GM12878 (cell line): ENCODE measurements at regions of chr5 and their contacts with region 1.

Region 1: DNA sequence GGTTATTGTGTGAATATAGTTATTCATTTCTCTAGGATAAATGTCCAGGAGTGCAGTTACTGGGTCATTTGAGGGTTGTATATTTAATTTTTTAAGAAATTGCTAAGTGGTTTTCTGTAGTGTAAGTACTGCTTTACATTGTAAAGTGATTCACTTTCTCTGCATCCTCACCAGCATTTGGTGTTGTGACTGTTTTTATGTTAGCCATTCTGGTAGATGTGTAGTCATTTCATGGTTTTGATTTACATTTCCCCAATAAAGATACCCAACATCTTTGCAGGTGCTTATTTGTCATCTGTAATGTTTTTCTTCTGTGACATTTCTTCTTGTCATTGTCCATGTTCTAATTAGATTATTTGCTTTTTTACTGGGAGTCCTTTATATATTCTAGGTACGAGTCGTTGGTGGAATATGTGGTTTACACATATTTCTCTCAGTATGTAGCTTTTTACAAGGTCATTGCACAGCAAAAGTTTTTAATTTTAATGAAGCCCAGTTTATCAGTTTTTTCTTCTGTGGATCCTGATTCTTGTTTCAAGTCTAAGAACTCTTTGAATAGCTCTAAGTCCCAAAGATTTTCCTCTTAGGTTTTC is 34.0 kb downstream of the SCGB3A1 start:
- DNase-seq: no peak
- ATAC-seq: no peak
- H3K4me3 ChIP-seq: no peak overlapping the region
- H3K27ac ChIP-seq: no peak overlapping the region
- H3K4me1 ChIP-seq: peaks cover 13% of the 10 kb centered on the region
- H3K27me3 ChIP-seq: no peaks in the 10 kb centered on the region
- CTCF ChIP-seq: no peak
- EP300 ChIP-seq: no peak
- POLR2A ChIP-seq: no peak
- RAD21 ChIP-seq: no peak

Region 2: GRCh38 chr5:180390441-180391190 is 166.7 kb before region 1 on chr5:
- CTCF ChIA-PET with region 1: no interaction called
- POLR2A ChIA-PET with region 1: no interaction called
- RAD21 ChIA-PET with region 1: no interaction called
- SMC1A ChIA-PET with region 1: no interaction called
- in situ Hi-C with region 1: no loop called
- intact Hi-C with region 1: no loop called
- DNase-seq: no peak
- ATAC-seq: no peak
- H3K4me3 ChIP-seq: no peak overlapping the region
- H3K27ac ChIP-seq: no peak overlapping the region
- H3K4me1 ChIP-seq: no peaks in the 10 kb centered on the region
- H3K27me3 ChIP-seq: no peaks in the 10 kb centered on the region
- CTCF ChIP-seq: no peak
- EP300 ChIP-seq: no peak
- POLR2A ChIP-seq: no peak
- RAD21 ChIP-seq: no peak

Region 3: GRCh38 chr5:180540050-180540694 is 17.1 kb before region 1 on chr5:
- CTCF ChIA-PET with region 1: interaction called, 4 read pairs
- POLR2A ChIA-PET with region 1: no interaction called
- RAD21 ChIA-PET with region 1: no interaction called
- SMC1A ChIA-PET with region 1: interaction called, 3 read pairs
- in situ Hi-C with region 1: no loop called
- intact Hi-C with region 1: loop called (anchors 1 kb)
- DNase-seq: no peak
- ATAC-seq: peak; percentile 97
- H3K4me3 ChIP-seq: no peak overlapping the region
- H3K27ac ChIP-seq: peak overlapping the region; percentile 71
- H3K4me1 ChIP-seq: 0 out of 2 replicates have a peak, but pooled peaks cover 6% of the 10 kb centered on the region
- H3K27me3 ChIP-seq: no peaks in the 10 kb centered on the region
- CTCF ChIP-seq: no peak
- EP300 ChIP-seq: peak in 1 of 2 experiments; percentile 71; a peak in 1 of 4 replicates
- POLR2A ChIP-seq: no peak
- RAD21 ChIP-seq: no peak